ENCODE measurements at regions of chr3 and their contacts with region 1.

Region 1: GRCh38 chr3:89932882-89933281 is 825.5 kb downstream of the EPHA3 start:
- DNase-seq: no peak
- H3K4me3 Mint-ChIP-seq: no peak overlapping the region
- H3K27ac Mint-ChIP-seq: no peak overlapping the region
- H3K4me1 Mint-ChIP-seq: no peaks in the 10 kb centered on the region
- H3K27me3 Mint-ChIP-seq: no peaks in the 10 kb centered on the region
- CTCF ChIP-seq: no peak

Region 2: DNA sequence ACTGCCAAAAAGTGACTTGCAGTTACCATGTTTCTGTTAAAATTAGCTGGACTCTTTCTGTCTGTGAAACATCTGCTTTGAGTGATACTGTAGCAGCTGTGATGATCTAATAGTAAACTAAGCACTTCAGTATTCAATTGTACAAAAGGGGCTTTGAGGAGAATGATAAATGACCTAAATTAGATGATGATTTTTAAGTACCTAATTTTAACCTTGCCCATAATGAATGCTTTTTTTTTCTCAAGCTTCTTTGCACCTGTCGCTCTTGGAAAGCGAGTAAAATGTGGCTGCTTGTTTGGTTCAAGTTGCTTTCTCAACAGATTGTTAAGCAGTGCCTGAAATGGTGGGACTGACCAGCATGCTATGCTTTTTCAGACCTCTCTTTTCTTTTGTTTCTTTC is 73.1 kb before region 1 on chr3:
- CTCF ChIA-PET with region 1: no interaction called
- POLR2A ChIA-PET with region 1: no interaction called
- intact Hi-C with region 1: loop called (anchors 10 kb)
- DNase-seq: no peak
- H3K4me3 Mint-ChIP-seq: no peak overlapping the region
- H3K27ac Mint-ChIP-seq: no peak overlapping the region
- H3K4me1 Mint-ChIP-seq: no peaks in the 10 kb centered on the region
- H3K27me3 Mint-ChIP-seq: no peaks in the 10 kb centered on the region
- CTCF ChIP-seq: no peak

Region 3: DNA sequence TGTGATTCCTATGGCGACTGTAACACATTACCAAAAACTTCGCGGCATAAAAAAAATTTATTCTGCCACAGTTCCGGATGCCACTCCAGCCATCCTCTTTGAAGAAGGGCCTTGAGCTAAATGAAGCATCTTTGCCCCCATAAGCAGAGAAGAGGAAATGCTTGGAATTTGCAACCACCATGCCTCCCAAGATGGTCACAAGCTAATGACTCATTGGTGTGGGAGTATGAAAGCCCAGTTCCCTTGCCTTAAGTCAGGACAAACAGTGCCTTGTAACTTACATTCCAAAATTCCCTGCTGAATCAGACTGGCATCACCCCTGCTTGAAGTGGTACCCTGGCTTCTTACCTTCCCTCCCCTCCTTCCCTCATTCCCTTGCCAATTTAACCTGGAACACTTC is 252.0 kb after region 1 on chr3:
- CTCF ChIA-PET with region 1: no interaction called
- POLR2A ChIA-PET with region 1: no interaction called
- intact Hi-C with region 1: no loop called
- DNase-seq: peak; percentile 44
- H3K4me3 Mint-ChIP-seq: no peak overlapping the region
- H3K27ac Mint-ChIP-seq: no peak overlapping the region
- H3K4me1 Mint-ChIP-seq: peaks cover 6% of the 10 kb centered on the region
- H3K27me3 Mint-ChIP-seq: no peaks in the 10 kb centered on the region
- CTCF ChIP-seq: no peak